ENCODE measurements at regions of chr2 and their contacts with region 1.

Region 1: GRCh38 chr2:71331581-71332434 is at the start of gene ZNF638:
- DNase-seq: peak; percentile 93
- ATAC-seq: peak; percentile 99
- H3K4me3 Mint-ChIP-seq: peak within 1 kb of the TSS; percentile 93
- H3K27ac Mint-ChIP-seq: peak within 1 kb of the TSS; percentile 99
- H3K4me1 Mint-ChIP-seq: peaks cover 27% of the 10 kb centered on the region
- H3K27me3 Mint-ChIP-seq: peaks cover 10% of the 10 kb centered on the region
- total RNA-seq, gene ZNF638: 88.0 to 105 TPM

Region 2: DNA sequence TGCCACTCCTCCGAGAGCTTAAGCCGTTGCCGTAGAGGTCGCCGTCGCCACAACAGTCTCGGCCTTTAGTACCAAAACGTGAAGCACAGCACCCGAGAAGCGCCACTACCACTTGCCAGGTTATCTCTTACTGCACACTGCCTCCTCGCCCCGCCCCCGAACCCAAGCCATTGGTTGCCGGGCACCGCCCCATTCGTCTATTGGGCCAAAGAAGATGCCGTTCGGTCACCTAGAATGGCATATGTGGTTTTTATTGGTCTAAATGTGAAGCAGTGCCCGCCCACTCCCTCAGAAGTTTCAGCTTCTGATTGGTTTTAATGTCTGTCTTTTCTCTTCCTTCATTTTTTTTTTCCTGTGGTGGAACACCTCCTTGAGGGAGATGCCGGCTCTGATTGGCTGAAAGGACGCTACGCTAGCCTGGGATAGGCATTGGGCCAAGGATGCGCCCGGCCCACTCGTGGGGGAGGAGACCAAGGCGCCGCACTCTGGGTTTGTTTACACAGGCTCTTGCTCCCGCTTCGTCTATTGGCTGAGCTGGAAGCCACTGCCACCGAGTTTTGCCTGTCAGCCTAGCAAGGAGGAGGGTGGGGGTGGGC is 104.7 kb before region 1 on chr2 and contains the start of gene PAIP2B:
- CTCF ChIA-PET with region 1: interaction called, 18 read pairs
- DNase-seq: peak; percentile 99
- ATAC-seq: peak; percentile 97
- H3K4me3 Mint-ChIP-seq: peak within 1 kb of the TSS; percentile 89
- H3K27ac Mint-ChIP-seq: peak within 1 kb of the TSS; percentile 83
- H3K4me1 Mint-ChIP-seq: peaks cover 10% of the 10 kb centered on the region
- H3K27me3 Mint-ChIP-seq: peaks cover 20% of the 10 kb centered on the region
- total RNA-seq, gene PAIP2B: 1.1 to 1.5 TPM

Region 3: DNA sequence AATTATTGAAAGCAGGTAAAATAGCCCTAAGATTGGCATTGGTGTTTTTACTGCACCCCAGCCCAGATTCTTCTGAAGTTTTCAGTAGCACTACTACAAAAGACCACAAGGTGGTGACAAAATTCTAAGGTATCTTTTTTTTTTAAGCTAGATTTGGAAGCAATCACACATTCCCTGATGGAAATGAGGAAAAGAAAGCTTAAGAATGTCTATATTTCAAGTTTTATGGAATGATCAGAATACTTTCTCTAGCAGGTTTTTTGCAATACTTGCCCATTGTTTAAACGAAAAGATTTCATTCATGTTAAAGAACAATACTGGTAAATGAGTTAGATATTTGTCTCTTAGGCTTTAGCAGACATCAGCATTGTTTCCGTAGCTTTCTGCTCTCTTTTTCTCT is 32.3 kb before region 1 on chr2:
- CTCF ChIA-PET with region 1: interaction called, 28 read pairs
- DNase-seq: no peak
- ATAC-seq: no peak
- H3K4me3 Mint-ChIP-seq: no peak overlapping the region
- H3K27ac Mint-ChIP-seq: no peak overlapping the region
- H3K4me1 Mint-ChIP-seq: no peaks in the 10 kb centered on the region
- H3K27me3 Mint-ChIP-seq: peaks cover 6% of the 10 kb centered on the region

Region 4: GRCh38 chr2:71346065-71346464 is 14.3 kb after region 1 on chr2:
- CTCF ChIA-PET with region 1: interaction called, 18 read pairs
- DNase-seq: no peak
- ATAC-seq: no peak
- H3K4me3 Mint-ChIP-seq: no peak overlapping the region
- H3K27ac Mint-ChIP-seq: no peak overlapping the region
- H3K4me1 Mint-ChIP-seq: peaks cover 2% of the 10 kb centered on the region
- H3K27me3 Mint-ChIP-seq: no peaks in the 10 kb centered on the region

Region 5: GRCh38 chr2:71410696-71411095 is 78.9 kb after region 1 on chr2:
- CTCF ChIA-PET with region 1: no interaction called
- DNase-seq: no peak
- ATAC-seq: no peak
- H3K4me3 Mint-ChIP-seq: no peak overlapping the region
- H3K27ac Mint-ChIP-seq: no peak overlapping the region
- H3K4me1 Mint-ChIP-seq: no peaks in the 10 kb centered on the region
- H3K27me3 Mint-ChIP-seq: no peaks in the 10 kb centered on the region